BJ (cell line): ENCODE measurements at regions of chr22 and their contacts with region 1.

Region 1: DNA sequence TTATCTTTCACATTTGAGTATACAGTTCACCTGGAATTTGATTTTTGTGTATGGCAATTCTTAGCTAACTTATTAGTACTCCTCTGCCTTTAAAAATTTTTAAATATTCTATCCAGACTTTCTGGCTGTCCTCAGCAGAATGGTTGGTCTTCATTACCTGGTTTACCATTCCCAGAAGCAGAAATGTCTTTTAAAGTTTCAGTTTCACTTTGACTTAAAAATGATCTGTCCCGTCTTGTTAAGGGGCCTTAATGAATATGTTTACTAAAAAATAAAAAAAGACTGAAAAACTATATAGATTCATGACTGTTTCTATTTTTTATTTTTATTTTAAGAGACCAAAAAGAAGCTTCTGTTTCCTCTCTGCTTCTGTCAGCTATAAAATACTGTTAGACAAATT is 70.5 kb upstream of the TNRC6B start:
- DNase-seq: no peak
- H3K4me3 ChIP-seq: peak overlapping the region; percentile 1
- H3K27me3 ChIP-seq: no peaks in the 10 kb centered on the region; the same call in 1 of the 2 replicates
- CTCF ChIP-seq: no peak

Region 2: GRCh38 chr22:40147388-40148176 is 40.3 kb after region 1 on chr22:
- CTCF ChIA-PET with region 1: no interaction called
- POLR2A ChIA-PET with region 1: interaction called, 10 read pairs
- DNase-seq: no peak
- H3K4me3 ChIP-seq: no peak overlapping the region
- H3K27me3 ChIP-seq: no peaks in the 10 kb centered on the region
- CTCF ChIP-seq: no peak

Region 3: DNA sequence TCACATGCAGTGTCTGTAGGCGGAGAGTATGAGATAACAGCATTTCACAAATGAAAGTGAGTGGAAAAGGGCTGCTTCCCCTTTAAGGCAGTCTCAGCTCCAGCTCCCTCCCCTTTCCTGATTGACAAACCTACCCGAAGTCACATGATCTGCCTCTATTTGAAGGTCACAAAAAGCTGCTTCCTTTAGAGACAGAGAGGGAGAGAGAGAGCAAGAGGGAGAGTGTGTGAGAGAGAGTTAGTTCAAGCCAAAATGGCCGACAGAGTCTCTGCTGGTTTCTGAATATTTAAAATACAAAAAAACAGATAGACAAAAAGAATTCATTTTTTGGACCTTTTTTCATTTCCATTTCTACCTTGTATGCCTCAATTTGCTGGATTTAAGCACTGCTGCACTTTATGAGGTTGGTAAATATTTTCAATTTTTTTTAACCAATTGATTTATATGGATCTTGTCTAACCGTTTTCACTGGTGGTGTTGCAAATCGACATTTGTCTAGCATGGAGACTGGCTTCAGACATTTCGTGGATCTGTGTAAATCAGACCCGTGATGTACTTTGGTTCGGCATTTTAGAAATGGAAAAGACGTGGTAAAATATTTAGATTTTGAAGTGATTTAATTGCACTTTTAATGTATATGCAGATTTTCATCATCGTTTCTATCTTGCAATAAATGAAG is 70.6 kb after region 1 on chr22 and contains the start of gene TNRC6B:
- CTCF ChIA-PET with region 1: no interaction called
- POLR2A ChIA-PET with region 1: no interaction called
- DNase-seq: peak; percentile 92
- H3K4me3 ChIP-seq: peak within 1 kb of the TSS; percentile 64
- H3K27me3 ChIP-seq: no peaks in the 10 kb centered on the region
- CTCF ChIP-seq: no peak
- polyA plus RNA-seq, gene TNRC6B: 6.6 and 8.0 TPM in 2 replicates